Right cardiac atrium (tissue), 5 donors: ENCODE measurements at regions of chr21 and their contacts with region 1.

Region 1: GRCh38 chr21:36927719-36928117 is 38.8 kb downstream of the HLCS start:
- DNase-seq: peak; percentile 83 to 93 (median 85)
- ATAC-seq: peak; percentile 87 to 90
- H3K4me3 ChIP-seq: no peak overlapping the region
- H3K27ac ChIP-seq: no peak overlapping the region
- H3K4me1 ChIP-seq: no peaks in the 10 kb centered on the region
- H3K27me3 ChIP-seq: no peaks in the 10 kb centered on the region

Region 2: GRCh38 chr21:36419996-36420395 is 507.7 kb before region 1 on chr21:
- intact Hi-C with region 1: loop called (anchors 5 to 10 kb)
- DNase-seq: peak; percentile 91 to 92 (median 91)
- ATAC-seq: peak; percentile 95 to 97
- H3K4me3 ChIP-seq: no peak overlapping the region
- H3K27ac ChIP-seq: no peak overlapping the region
- H3K4me1 ChIP-seq: peaks cover 4% of the 10 kb centered on the region
- H3K27me3 ChIP-seq: no peaks in the 10 kb centered on the region

Region 3: DNA sequence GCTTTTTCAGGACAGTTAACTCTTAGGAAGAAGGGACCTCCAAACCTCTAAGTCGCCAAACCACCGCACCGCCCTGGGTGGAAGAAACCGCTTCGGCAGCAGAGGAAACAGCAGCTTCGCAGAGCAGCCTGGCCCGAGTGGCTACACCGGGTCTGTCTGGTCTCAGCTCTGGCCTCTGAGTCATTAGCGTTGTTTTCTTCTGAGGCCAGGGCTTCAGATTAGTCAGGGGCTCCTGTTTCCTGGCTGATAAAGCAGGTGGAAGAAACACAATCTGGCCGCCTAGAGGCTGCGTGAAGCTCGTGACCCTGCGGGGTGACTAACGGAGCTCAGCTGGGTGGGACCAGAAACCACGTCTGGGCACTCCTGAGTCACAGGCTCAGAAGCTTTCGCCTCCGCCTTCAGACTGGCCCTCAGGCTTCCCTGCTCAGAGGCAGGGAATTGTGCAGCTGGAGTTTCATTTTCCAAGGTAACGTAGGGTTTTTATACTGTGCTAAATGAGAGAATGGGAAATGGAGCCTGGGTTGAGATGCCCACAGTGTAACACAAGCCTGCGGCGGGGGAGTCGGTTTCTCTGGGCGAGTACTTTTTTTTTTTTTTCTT is 497.7 kb before region 1 on chr21:
- intact Hi-C with region 1: loop called in 2 of 4 experiments (anchors 10 kb)
- DNase-seq: peak; percentile 86 to 90 (median 87)
- ATAC-seq: peak; percentile 93 to 97
- H3K4me3 ChIP-seq: no peak overlapping the region
- H3K27ac ChIP-seq: peak overlapping the region; percentile 26
- H3K4me1 ChIP-seq: no peaks in the 10 kb centered on the region
- H3K27me3 ChIP-seq: no peaks in the 10 kb centered on the region

Region 4: GRCh38 chr21:36504067-36505058 is 423.4 kb before region 1 on chr21:
- intact Hi-C with region 1: loop called (anchors 2 to 10 kb)
- DNase-seq: no peak
- ATAC-seq: peak; percentile 55 to 82
- H3K4me3 ChIP-seq: no peak overlapping the region
- H3K27ac ChIP-seq: no peak overlapping the region
- H3K4me1 ChIP-seq: no peaks in the 10 kb centered on the region
- H3K27me3 ChIP-seq: no peaks in the 10 kb centered on the region

Region 5: GRCh38 chr21:36630485-36631206 is 297.1 kb before region 1 on chr21:
- intact Hi-C with region 1: loop called in 3 of 4 experiments (anchors 2 to 10 kb)
- DNase-seq: peak in 2 of 3 donors; percentile 48 to 69
- ATAC-seq: peak; percentile 43 to 60
- H3K4me3 ChIP-seq: no peak overlapping the region
- H3K27ac ChIP-seq: no peak overlapping the region
- H3K4me1 ChIP-seq: no peaks in the 10 kb centered on the region
- H3K27me3 ChIP-seq: no peaks in the 10 kb centered on the region

Region 6: DNA sequence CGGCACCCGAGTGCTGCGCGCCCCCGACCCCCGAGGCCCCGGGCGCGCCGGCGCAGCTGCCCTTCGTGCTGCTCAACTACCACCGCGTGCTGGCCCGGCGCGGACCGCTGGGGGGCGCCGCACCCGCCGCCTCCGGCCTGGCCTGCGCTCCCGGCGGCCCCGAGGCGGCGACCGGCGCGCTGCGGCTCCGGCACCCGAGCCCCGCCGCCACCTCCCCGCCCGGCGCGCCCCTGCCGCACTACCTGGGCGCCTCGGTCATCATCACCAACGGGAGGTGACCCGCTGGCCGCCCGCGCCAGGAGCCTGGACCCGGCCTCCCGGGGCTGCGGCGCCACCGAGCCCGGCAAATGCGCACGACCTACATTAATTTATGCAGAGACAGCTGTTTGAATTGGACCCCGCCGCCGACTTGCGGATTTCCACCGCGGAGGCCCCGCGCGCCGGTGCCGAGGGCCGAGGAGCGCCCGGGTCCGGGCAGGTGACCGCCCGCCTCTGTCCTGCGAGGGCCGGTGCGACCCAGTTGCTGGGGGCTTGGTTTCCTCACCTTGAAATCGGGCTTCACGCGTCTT is 179.8 kb before region 1 on chr21:
- intact Hi-C with region 1: loop called in 1 of 4 experiments (anchors 10 kb)
- DNase-seq: peak; percentile 43 to 85 (median 81)
- ATAC-seq: peak; percentile 60 to 63
- H3K4me3 ChIP-seq: peak overlapping the region; percentile 76
- H3K27ac ChIP-seq: no peak overlapping the region
- H3K4me1 ChIP-seq: no peaks in the 10 kb centered on the region
- H3K27me3 ChIP-seq: no peaks in the 10 kb centered on the region